ENCODE measurements at regions of chr10 and their contacts with region 1.

Region 1: DNA sequence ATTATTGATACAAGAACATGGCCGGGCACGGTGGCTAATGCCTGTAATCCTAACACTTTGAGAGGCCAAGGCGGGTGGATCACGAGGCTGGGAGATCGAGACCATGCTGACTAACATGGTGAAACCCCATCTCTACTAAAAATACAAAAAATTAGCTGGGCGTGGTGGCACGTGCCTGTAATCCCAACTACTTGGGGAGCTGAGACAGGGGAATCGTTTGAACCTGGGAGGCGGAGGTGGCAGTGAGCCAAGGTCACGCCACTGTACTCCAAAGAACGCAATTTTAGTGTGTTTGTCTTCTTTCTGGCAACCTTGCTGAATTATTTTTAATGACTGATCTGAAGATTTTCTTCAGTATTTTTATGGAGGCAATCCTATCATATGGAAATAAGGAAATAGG is 46.2 kb downstream of the IDE start:
- H3K4me3 Mint-ChIP-seq: no peak overlapping the region
- H3K27ac Mint-ChIP-seq: no peak overlapping the region
- H3K4me1 Mint-ChIP-seq: peaks cover 4% of the 10 kb centered on the region
- H3K27me3 Mint-ChIP-seq: no peaks in the 10 kb centered on the region

Region 2: GRCh38 chr10:92463582-92463981 is 64.1 kb before region 1 on chr10:
- intact Hi-C with region 1: loop called (anchors 2 kb)
- H3K4me3 Mint-ChIP-seq: no peak overlapping the region
- H3K27ac Mint-ChIP-seq: no peak overlapping the region
- H3K4me1 Mint-ChIP-seq: no peaks in the 10 kb centered on the region
- H3K27me3 Mint-ChIP-seq: no peaks in the 10 kb centered on the region

Measured in dendritic cell treated with granulocyte-macrophage colony-stimulating factor and Interleukin-4, amounts not matched to agents 40 ng/mL and 50 ng/mL, for 4 days (primary cell).